RWPE1 (cell line): ENCODE measurements at regions of chr20 and their contacts with region 1.

Region 1: GRCh38 chr20:50189681-50190582 is 698 bp upstream of the CEBPB start:
- DNase-seq: peak; percentile 97
- H3K27ac ChIP-seq: peak overlapping the region; percentile 95
- CTCF ChIP-seq: peak; percentile 90

Region 2: DNA sequence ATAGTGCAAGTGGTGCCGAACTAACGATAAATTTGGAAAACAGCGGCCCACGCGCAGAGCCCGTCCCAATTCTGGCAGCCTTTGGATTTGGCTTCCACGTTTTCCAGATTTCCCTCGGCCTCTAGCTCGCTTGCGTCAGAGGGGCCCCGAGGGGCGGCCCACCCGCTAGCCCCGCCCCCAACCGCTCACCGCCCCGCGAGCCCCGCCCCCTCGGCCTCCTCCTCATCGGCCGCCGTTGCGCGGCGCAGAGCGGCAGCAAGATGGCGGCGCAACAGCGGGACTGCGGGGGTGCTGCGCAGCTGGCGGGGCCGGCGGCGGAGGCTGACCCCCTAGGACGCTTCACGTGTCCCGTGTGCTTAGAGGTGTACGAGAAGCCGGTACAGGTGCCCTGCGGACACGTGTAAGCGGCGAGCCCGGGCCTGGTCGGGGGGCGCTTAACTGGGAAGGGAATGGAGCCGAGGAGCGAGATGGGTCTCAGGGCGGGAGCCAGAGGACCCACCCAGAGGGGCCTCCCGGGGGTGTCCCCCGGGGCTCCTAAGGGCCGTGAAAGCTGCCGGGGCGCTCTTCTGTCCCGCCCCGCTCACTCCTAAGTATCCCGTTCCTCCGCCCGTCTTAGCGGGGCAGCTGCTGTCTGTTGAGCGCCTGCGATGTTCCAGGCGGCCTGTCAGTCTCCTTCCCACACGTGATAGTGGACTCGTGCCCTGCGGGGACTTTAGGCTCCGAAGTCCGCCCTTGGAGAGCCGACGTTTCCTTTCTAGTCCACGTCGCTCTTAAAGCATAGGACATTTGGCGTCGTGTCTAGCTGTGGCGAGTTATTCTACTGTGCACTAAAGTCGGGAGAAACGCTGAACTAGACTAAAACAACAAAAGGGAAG is 253.5 kb before region 1 on chr20 and contains the start of gene RNF114:
- CTCF ChIA-PET with region 1: no interaction called
- POLR2A ChIA-PET with region 1: no interaction called
- DNase-seq: peak; percentile 100
- H3K27ac ChIP-seq: peak within 1 kb of the TSS; percentile 72
- CTCF ChIP-seq: no peak

Region 3: GRCh38 chr20:50453533-50454244 is 263.8 kb after region 1 on chr20:
- CTCF ChIA-PET with region 1: interaction called, 11 read pairs
- POLR2A ChIA-PET with region 1: no interaction called
- DNase-seq: no peak
- H3K27ac ChIP-seq: peak overlapping the region; percentile 26
- CTCF ChIP-seq: no peak

Region 4: GRCh38 chr20:50464026-50464724 is 274.2 kb after region 1 on chr20:
- CTCF ChIA-PET with region 1: interaction called, 42 read pairs
- POLR2A ChIA-PET with region 1: no interaction called
- DNase-seq: peak; percentile 76
- H3K27ac ChIP-seq: peak overlapping the region; percentile 48
- CTCF ChIP-seq: peak; percentile 93